Left cardiac atrium (tissue), 4 donors: ENCODE measurements at regions of chr19 and their contacts with region 1.

Region 1: GRCh38 chr19:39412100-39412866 is at the start of gene PLEKHG2:
- DNase-seq: peak; percentile 97
- ATAC-seq: peak; percentile 61 to 64
- total RNA-seq, gene PLEKHG2: 13.7 to 28.0 TPM

Region 2: DNA sequence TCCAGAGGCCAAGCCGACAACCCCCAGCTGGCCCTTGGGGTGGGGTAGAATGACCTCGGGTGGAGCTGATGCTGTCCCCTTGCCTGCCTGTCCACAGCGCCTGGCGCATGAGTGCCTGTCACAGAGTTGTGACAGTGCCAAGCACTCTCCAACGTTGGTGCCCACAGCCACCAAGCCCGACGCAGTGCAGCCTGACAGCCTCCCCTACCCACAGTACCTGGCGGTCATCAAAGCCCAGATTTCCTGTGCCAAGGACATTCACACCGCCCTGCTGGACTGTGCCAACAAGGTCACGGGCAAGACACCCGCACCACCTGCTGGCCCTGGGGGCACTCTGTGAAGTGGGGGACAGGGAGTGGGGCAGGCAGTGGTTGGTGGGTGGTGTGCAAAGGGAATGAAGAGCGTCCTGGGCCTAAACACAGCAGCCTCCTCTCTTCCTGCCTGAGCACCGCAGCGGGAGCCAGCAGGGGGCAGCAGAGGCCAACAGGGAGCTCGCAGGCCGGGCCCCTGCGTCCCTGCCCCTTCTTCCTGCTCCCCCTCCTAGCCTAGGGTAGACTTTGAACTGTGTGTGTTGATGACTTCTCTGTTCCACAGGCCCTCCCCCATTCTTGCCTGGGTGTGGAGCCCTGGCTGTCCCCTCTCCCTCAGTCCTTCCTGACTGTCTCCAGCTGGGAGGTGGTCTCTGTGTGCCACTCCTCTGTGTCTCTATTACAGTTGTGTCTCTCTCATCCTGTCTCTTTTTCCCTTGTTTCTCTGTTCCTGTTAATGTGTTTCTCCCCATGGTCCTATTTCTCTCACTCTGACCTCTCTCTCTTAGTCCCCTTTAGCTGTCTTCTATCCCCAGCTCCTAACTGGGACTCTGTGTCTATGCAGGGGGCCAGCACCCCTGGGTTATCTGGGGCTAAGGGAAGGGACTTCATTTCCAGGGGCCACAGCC is 14.7 kb before region 1 on chr19:
- intact Hi-C with region 1: loop called in 1 of 2 experiments (anchors 1 kb)
- DNase-seq: peak; percentile 92
- ATAC-seq: peak; percentile 80 to 83

Region 3: DNA sequence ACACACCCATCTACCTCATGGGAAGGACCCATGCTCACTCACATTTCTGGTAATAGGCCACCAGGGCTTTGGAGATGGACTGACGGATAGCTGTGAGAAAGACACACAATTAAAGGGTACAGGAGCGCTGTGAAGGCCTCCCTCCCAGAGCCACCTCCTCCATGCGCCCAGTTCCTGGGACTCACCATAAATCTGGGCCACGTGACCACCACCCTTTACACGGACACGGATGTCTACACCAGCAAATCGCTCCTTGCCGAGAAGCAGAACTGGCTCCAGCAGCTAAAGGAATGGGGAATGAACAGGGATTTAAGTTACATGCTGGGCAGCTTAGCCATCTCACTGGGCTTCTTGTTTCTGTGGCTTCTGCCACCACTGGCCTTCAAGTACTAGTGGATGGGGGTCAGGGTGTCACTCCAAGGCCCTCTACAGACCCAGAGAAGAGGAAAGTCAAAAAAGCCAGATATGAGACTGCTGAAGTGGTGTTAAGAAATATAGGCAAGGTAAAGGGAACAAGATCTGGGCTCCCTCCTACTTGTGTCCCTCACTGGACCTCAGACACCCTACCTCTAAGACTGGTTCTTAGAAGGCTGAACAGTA is 21.3 kb after region 1 on chr19:
- intact Hi-C with region 1: loop called in 1 of 2 experiments (anchors 2 kb)
- DNase-seq: no peak
- ATAC-seq: no peak